ENCODE measurements at regions of chr7 and their contacts with region 1.

Region 1: DNA sequence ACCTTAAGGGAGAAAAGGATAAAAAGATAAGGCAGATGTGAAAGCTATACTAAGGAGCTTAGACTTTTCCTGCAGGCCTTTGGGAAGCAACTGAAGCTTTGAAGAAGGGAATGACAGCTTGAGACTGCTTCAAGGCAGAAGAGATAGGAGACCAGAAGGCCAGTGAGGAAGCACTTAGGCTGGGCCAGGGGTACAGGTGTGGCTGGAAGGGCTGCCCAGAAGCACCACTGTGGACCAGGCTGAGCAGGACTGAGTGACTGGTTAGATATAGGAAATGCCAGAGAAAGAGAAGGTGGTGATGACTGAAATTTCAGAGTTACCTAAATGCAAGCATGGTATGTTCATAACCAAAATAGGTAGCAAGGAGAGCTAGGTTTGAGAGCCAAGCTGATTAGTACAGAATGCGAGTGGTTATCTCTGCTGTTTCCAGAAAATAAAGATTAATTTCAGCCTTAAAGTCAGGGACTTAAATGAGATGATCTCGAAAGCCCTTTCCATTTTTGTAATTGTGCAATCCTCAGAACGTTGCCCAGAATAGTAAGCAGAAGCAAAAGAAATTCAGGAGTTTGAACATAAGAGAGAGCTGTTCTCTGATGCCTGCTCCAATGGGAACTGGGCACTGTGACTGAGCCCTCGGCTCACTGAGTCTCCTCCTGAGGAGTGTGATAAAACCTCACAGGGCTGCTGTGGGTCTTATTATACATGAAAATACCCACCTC is 54.9 kb downstream of the MET start:
- DNase-seq: no peak
- H3K4me3 ChIP-seq: no peak overlapping the region
- H3K4me3 Mint-ChIP-seq: peak overlapping the region; percentile 36
- H3K27ac Mint-ChIP-seq: peak overlapping the region; percentile 48
- H3K4me1 ChIP-seq: peaks cover 46% of the 10 kb centered on the region
- H3K4me1 Mint-ChIP-seq: peaks cover 42% of the 10 kb centered on the region
- H3K27me3 ChIP-seq: no peaks in the 10 kb centered on the region
- H3K27me3 Mint-ChIP-seq: no peaks in the 10 kb centered on the region
- CTCF ChIP-seq: no peak

Region 2: GRCh38 chr7:116713918-116714317 is 13.0 kb before region 1 on chr7:
- CTCF ChIA-PET with region 1: no interaction called
- POLR2A ChIA-PET with region 1: no interaction called
- intact Hi-C with region 1: loop called (anchors 2 kb)
- DNase-seq: no peak
- H3K4me3 ChIP-seq: no peak overlapping the region
- H3K4me3 Mint-ChIP-seq: no peak overlapping the region
- H3K27ac Mint-ChIP-seq: no peak overlapping the region
- H3K4me1 ChIP-seq: peaks cover 19% of the 10 kb centered on the region
- H3K4me1 Mint-ChIP-seq: peaks cover 29% of the 10 kb centered on the region
- H3K27me3 ChIP-seq: no peaks in the 10 kb centered on the region
- H3K27me3 Mint-ChIP-seq: no peaks in the 10 kb centered on the region
- CTCF ChIP-seq: no peak

Measured in Caco-2 (cell line).